Activated CD4-positive, alpha-beta memory T cell treated with anti-CD3 and anti-CD28 coated beads for 36 hours (primary cell): ENCODE measurements at regions of chr12 and their contacts with region 1.

Region 1: GRCh38 chr12:120086801-120087621 is 29.5 kb downstream of the RAB35 start:
- DNase-seq: peak; percentile 100
- H3K4me3 Mint-ChIP-seq: peak overlapping the region; percentile 64
- H3K27ac Mint-ChIP-seq: peak overlapping the region; percentile 87
- H3K4me1 Mint-ChIP-seq: peaks cover 38% of the 10 kb centered on the region
- H3K27me3 Mint-ChIP-seq: no peaks in the 10 kb centered on the region

Region 2: GRCh38 chr12:119667577-119668323 is 419.3 kb before region 1 on chr12 and contains the start of gene PRKAB1:
- CTCF ChIA-PET with region 1: no interaction called
- POLR2A ChIA-PET with region 1: no interaction called
- intact Hi-C with region 1: loop called (anchors 1 kb)
- DNase-seq: peak; percentile 98
- H3K4me3 Mint-ChIP-seq: peak within 1 kb of the TSS; percentile 82
- H3K27ac Mint-ChIP-seq: peak within 1 kb of the TSS; percentile 88
- H3K4me1 Mint-ChIP-seq: peaks cover 48% of the 10 kb centered on the region
- H3K27me3 Mint-ChIP-seq: no peaks in the 10 kb centered on the region
- total RNA-seq, gene PRKAB1: 27.3 to 29.3 TPM

Region 3: GRCh38 chr12:119819322-119819721 is 267.7 kb before region 1 on chr12:
- CTCF ChIA-PET with region 1: no interaction called
- POLR2A ChIA-PET with region 1: no interaction called
- intact Hi-C with region 1: no loop called
- DNase-seq: no peak
- H3K4me3 Mint-ChIP-seq: no peak overlapping the region
- H3K27ac Mint-ChIP-seq: no peak overlapping the region
- H3K4me1 Mint-ChIP-seq: no peaks in the 10 kb centered on the region
- H3K27me3 Mint-ChIP-seq: no peaks in the 10 kb centered on the region

Region 4: DNA sequence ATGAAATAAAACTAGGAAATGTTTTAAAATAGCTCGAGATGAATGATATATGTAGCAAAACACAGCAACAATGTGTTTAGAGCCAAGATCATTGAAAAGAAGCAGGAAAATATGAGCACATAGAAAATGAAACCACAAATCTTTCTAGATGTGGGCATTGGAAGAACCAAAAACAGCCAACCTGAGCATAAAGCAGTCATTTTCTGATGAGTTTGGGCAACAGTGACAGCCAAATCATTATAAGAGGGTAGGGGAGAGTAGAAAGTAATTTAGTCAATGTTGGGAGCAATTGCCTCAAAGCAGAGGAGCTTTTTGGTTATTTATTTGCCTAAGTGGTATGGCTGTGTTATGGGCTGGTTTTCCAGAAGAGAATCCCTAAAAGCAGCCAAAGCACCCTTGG is 106.8 kb before region 1 on chr12:
- CTCF ChIA-PET with region 1: interaction called, 6 read pairs
- POLR2A ChIA-PET with region 1: interaction called, 10 read pairs
- intact Hi-C with region 1: no loop called
- DNase-seq: no peak
- H3K4me3 Mint-ChIP-seq: peak overlapping the region; percentile 53
- H3K27ac Mint-ChIP-seq: peak overlapping the region; percentile 82
- H3K4me1 Mint-ChIP-seq: peaks cover 20% of the 10 kb centered on the region
- H3K27me3 Mint-ChIP-seq: peaks cover 2% of the 10 kb centered on the region

Region 5: GRCh38 chr12:120000556-120000955 is 86.5 kb before region 1 on chr12:
- CTCF ChIA-PET with region 1: interaction called, 16 read pairs
- POLR2A ChIA-PET with region 1: no interaction called
- intact Hi-C with region 1: no loop called
- DNase-seq: no peak
- H3K4me3 Mint-ChIP-seq: no peak overlapping the region
- H3K27ac Mint-ChIP-seq: no peak overlapping the region
- H3K4me1 Mint-ChIP-seq: peaks cover 58% of the 10 kb centered on the region
- H3K27me3 Mint-ChIP-seq: no peaks in the 10 kb centered on the region

Region 6: GRCh38 chr12:120126635-120127005 is 39.6 kb after region 1 on chr12:
- CTCF ChIA-PET with region 1: no interaction called
- POLR2A ChIA-PET with region 1: no interaction called
- intact Hi-C with region 1: no loop called
- DNase-seq: peak; percentile 54
- H3K4me3 Mint-ChIP-seq: no peak overlapping the region
- H3K27ac Mint-ChIP-seq: peak overlapping the region; percentile 91
- H3K4me1 Mint-ChIP-seq: peaks cover 53% of the 10 kb centered on the region
- H3K27me3 Mint-ChIP-seq: no peaks in the 10 kb centered on the region